Naive thymus-derived CD8-positive, alpha-beta T cell (primary cell): ENCODE measurements at regions of chr21 and their contacts with region 1.

Region 1: GRCh38 chr21:33360881-33361602 is 36.3 kb downstream of the IFNAR1 start:
- DNase-seq: peak; percentile 71 to 89 (median 85)
- ATAC-seq: peak; percentile 70
- H3K4me3 Mint-ChIP-seq: peak overlapping the region; percentile 72 to 92 (median 90)
- H3K27ac Mint-ChIP-seq: peak overlapping the region; percentile 86 to 99 (median 94)
- H3K4me1 Mint-ChIP-seq: peaks cover 10 to 44% (median 20%) of the 10 kb centered on the region in 4 donors
- H3K27me3 Mint-ChIP-seq: peaks cover 0 to 3% (median 0%) of the 10 kb centered on the region in 5 donors

Region 2: DNA sequence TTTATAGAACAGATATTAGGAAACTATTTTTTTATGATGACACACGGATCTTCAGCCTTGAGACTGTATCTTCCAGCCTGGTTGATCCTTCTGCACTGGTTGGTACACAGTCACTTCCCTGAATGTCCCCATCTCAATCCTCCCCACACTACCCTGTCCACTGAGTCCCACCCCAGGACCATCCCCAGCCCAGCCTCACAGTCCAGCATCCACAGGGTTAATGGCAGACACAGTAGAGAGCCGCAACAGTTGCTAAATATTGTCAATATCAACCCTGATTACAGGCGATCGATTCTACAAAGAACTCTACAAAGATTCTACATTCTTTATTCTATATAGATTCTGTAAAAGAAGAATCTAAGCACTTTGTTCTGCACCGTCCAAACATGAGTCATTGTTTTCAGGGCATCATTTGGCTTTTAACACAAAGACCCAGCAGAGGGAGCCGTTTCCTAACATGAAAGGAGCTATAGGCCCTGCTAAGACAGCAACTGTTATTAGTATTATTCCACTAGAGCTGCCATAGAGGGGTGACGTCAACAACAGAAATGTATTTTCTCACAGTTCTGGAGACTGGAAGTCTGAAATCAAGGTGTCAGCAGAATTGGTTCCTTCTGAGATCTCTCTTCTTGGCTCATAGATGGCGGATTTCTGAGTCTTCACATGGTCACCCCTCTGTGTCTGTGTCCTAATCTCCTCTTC is 161.4 kb before region 1 on chr21:
- POLR2A ChIA-PET with region 1: interaction called, 18 read pairs
- DNase-seq: peak; percentile 40 to 88 (median 80)
- ATAC-seq: peak; percentile 92
- H3K4me3 Mint-ChIP-seq: no peak overlapping the region
- H3K27ac Mint-ChIP-seq: peak overlapping the region in 7 of 10 donors; percentile 57 to 84 (median 80)
- H3K4me1 Mint-ChIP-seq: peaks cover 22 to 60% (median 46%) of the 10 kb centered on the region in 4 donors
- H3K27me3 Mint-ChIP-seq: no peaks in the 10 kb centered on the region

Region 3: GRCh38 chr21:33266050-33266788 is 94.8 kb before region 1 on chr21 and contains the start of gene IL10RB:
- POLR2A ChIA-PET with region 1: interaction called, 12 read pairs
- DNase-seq: peak; percentile 47 to 81 (median 70)
- ATAC-seq: peak; percentile 78 to 85
- H3K4me3 Mint-ChIP-seq: peak within 1 kb of the TSS; percentile 91 to 99 (median 96)
- H3K27ac Mint-ChIP-seq: peak within 1 kb of the TSS; percentile 90 to 98 (median 96)
- H3K4me1 Mint-ChIP-seq: peaks cover 38 to 80% (median 66%) of the 10 kb centered on the region in 4 donors
- H3K27me3 Mint-ChIP-seq: no peaks in the 10 kb centered on the region
- polyA plus RNA-seq, gene IL10RB: 44.6 to 50.6 (median 50.5) TPM

Region 4: GRCh38 chr21:33380483-33380998 is 19.5 kb after region 1 on chr21:
- POLR2A ChIA-PET with region 1: interaction called, 46 read pairs
- DNase-seq: peak; percentile 50 to 92 (median 74)
- ATAC-seq: peak; percentile 74 to 77
- H3K4me3 Mint-ChIP-seq: peak overlapping the region; percentile 19 to 80 (median 68)
- H3K27ac Mint-ChIP-seq: peak overlapping the region; percentile 86 to 95 (median 91)
- H3K4me1 Mint-ChIP-seq: peaks cover 27 to 82% (median 61%) of the 10 kb centered on the region in 4 donors
- H3K27me3 Mint-ChIP-seq: no peaks in the 10 kb centered on the region

Region 5: GRCh38 chr21:33444499-33444898 is 83.5 kb after region 1 on chr21:
- POLR2A ChIA-PET with region 1: interaction called, 20 read pairs
- DNase-seq: no peak
- ATAC-seq: no peak
- H3K4me3 Mint-ChIP-seq: no peak overlapping the region
- H3K27ac Mint-ChIP-seq: peak overlapping the region in 1 of 10 donors; percentile 5
- H3K4me1 Mint-ChIP-seq: peaks cover 4 to 38% (median 11%) of the 10 kb centered on the region in 4 donors
- H3K27me3 Mint-ChIP-seq: no peaks in the 10 kb centered on the region